ENCODE measurements at regions of chr2 and their contacts with region 1.

Region 1: DNA sequence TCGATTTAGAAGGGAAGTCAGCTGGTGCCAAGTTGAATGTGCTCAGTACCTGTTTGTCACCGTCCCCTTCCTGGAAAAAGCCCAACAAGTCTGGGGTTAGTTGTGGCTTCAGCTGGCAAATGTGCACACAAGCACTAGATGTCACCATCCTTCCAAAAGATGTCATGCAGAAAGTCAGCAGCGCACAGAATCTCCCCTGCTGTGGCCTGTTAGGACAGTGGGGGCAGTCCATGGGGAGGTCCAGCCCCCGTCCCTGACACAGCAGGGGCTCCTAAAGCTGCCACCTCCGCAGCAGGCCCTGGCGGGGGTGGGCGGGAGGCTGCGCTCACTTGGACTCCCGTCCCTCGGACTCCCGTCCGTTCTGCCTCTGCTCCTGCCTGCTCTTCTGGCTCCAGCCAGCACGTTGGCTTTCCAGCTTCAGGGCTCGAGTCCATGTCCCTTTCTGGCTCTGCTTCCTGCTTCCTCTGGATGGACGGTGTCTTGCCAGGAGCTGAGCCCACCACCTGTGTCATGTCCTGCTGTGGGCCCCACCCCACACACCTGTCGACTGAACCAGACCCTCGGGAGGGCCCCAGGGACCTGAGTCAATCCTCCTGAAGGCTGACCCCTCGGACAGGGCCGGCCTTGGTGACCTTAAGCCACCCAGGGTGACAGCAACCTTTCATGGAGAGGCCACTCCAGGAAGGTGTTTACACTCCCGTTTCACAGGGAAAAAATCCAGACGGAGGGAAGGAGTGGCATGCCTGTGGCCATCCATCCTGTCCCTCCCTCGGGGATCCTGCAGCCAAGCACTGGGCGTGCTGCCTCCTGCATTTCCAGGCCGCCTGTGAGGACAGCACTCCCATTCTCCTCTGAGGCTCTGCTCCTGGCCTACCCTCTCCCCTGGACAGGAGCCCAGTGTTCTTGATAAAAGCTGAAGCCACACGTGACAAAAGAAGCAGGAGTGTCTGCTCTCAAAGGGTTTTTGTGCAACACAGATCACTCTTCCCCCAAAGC is 8.5 kb downstream of the RAB17 start:
- DNase-seq: peak; percentile 19
- H3K4me3 ChIP-seq: no peak overlapping the region
- H3K27ac ChIP-seq: peak overlapping the region in 3 of 4 donors; percentile 5 to 72 (median 48)
- H3K4me1 ChIP-seq: peaks cover 6 to 10% (median 8%) of the 10 kb centered on the region in 4 donors
- H3K27me3 ChIP-seq: no peaks in the 10 kb centered on the region
- CTCF ChIP-seq: peak in 3 of 5 experiments; percentile 8 to 26 (median 12)
- EP300 ChIP-seq: no peak
- POLR2A ChIP-seq: no peak

Region 2: DNA sequence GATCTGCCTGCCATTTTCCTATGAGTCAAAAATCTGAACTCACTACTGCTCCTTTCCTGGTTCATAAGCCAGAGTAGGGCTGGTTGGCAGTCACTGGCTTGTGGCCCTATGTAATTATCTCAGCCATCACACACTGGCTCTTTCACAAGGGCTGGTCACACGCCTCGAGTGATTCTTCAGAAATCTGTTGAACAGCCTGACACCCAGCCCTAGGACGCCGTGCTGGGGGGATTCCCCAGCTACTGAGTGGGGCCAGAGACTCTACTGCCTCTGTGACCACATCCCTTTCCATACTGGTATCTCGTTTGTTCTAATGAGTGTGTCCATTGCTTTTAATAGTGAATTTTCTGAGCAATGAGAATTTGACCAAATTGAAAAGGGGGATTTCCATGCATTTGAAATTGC is 170.7 kb after region 1 on chr2:
- in situ Hi-C with region 1: loop called in 3 of 4 experiments (anchors 10 to 25 kb)
- intact Hi-C with region 1: no loop called
- DNase-seq: no peak
- H3K4me3 ChIP-seq: no peak overlapping the region
- H3K27ac ChIP-seq: no peak overlapping the region
- H3K4me1 ChIP-seq: no peaks in the 10 kb centered on the region
- H3K27me3 ChIP-seq: no peaks in the 10 kb centered on the region
- CTCF ChIP-seq: no peak
- EP300 ChIP-seq: no peak
- POLR2A ChIP-seq: no peak

Region 3: DNA sequence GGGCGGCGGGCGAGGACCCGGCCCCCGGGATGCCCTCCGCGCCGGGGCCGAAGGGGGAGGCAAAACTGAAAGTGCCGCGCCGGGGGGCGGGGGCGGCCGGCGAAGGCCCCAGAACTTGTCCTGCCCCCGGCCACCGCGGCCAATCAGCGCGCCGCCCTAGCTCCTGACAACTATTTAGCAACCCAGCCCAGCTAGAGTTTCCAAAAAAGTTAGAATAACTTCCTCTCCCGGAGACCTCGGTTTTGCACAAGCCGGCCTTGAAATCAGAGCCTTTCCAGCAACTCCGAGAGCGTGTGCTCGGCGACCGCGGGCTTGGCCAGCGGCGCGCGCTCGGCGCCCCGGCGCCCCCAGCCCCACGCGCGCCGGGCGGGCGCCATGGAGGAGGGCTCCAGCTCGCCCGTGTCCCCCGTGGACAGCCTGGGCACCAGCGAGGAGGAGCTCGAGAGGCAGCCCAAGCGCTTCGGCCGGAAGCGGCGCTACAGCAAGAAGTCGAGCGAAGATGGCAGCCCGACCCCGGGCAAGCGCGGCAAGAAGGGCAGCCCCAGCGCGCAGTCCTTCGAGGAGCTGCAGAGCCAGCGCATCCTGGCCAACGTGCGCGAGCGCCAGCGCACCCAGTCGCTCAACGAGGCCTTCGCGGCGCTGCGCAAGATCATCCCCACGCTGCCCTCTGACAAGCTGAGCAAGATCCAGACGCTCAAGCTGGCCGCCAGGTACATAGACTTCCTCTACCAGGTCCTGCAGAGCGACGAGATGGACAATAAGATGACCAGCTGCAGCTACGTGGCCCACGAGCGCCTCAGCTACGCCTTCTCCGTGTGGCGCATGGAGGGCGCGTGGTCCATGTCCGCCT is 1266.0 kb after region 1 on chr2 and contains the start of gene TWIST2:
- in situ Hi-C with region 1: no loop called
- intact Hi-C with region 1: no loop called
- DNase-seq: peak; percentile 58
- H3K4me3 ChIP-seq: peak within 1 kb of the TSS; percentile 48 to 60 (median 52)
- H3K27ac ChIP-seq: peak within 1 kb of the TSS; percentile 81 to 89 (median 85)
- H3K4me1 ChIP-seq: peaks cover 0 to 20% (median 0%) of the 10 kb centered on the region in 4 donors
- H3K27me3 ChIP-seq: peaks cover 85% of the 10 kb centered on the region
- CTCF ChIP-seq: no peak
- EP300 ChIP-seq: no peak
- POLR2A ChIP-seq: no peak
- total RNA-seq, gene TWIST2: 6.7 to 59.1 (median 16.8) TPM

Measured in transverse colon (tissue), 4 donors.